ENCODE measurements at regions of chr12 and their contacts with region 1.

Region 1: GRCh38 chr12:109713187-109713984 is at the start of gene FAM222A:
- DNase-seq: peak; percentile 93
- H3K4me3 Mint-ChIP-seq: peak within 1 kb of the TSS; percentile 55
- H3K27ac Mint-ChIP-seq: no peak within 1 kb of the TSS
- H3K4me1 Mint-ChIP-seq: peaks cover 2% of the 10 kb centered on the region
- H3K27me3 Mint-ChIP-seq: peaks cover 35% of the 10 kb centered on the region
- total RNA-seq, gene FAM222A: 0.20 to 0.38 TPM

Region 2: DNA sequence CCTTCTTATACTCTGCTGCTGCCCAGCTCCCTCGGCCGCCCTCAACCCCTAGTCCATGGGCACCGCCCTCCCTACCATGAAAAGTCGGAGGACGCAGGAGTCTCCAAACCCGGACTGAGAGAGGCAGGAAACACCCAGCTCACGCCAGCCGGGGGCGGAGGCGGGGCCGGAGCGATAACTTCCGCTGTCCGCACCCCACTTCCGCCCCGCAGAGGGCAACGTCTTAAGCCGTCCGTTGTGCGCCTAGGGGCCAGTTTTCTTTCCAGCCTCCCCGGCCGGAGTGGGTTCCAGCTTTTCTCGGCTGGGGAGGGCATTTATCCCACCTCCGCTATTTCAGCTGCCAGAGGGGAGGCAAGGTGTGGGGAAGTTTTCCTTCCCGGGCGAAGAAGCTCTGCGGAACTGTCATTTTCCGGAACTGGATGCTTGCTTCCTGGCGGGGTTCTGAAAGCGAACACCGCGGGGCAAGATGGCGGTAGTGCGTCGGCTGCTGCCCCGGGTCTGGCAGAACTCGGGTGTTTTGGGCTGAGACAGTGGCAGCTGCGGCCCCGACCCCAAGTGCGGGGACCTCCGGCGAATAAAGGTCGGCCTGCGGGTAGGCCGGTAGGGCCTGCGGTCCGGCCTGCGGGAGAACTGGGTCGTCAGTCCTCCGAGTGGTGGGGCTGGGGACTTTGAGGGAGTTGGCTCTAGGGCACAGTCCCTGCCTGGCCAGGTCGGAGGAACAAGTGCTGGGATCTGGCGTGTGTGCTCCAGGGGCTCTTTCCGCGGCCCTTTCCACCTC is 236.0 kb before region 1 on chr12 and contains the starts of genes KCTD10 and UBE3B:
- CTCF ChIA-PET with region 1: no interaction called
- intact Hi-C with region 1: loop called (anchors 1 kb)
- DNase-seq: peak; percentile 87
- H3K4me3 Mint-ChIP-seq: peak within 1 kb of the TSS; percentile 97
- H3K27ac Mint-ChIP-seq: peak within 1 kb of the TSS; percentile 98
- H3K4me1 Mint-ChIP-seq: peaks cover 49% of the 10 kb centered on the region
- H3K27me3 Mint-ChIP-seq: no peaks in the 10 kb centered on the region
- total RNA-seq, gene KCTD10: 31.1 to 33.4 TPM
- total RNA-seq, gene UBE3B: 26.2 to 26.6 TPM

Region 3: GRCh38 chr12:109597795-109598427 is 115.5 kb before region 1 on chr12:
- CTCF ChIA-PET with region 1: interaction called, 9 read pairs
- intact Hi-C with region 1: loop called (anchors 1 kb)
- DNase-seq: peak; percentile 80
- H3K4me3 Mint-ChIP-seq: no peak overlapping the region
- H3K27ac Mint-ChIP-seq: no peak overlapping the region
- H3K4me1 Mint-ChIP-seq: peaks cover 35% of the 10 kb centered on the region
- H3K27me3 Mint-ChIP-seq: no peaks in the 10 kb centered on the region

Region 4: GRCh38 chr12:109880016-109880931 is 166.9 kb after region 1 on chr12 and contains the start of gene GLTP:
- CTCF ChIA-PET with region 1: no interaction called
- intact Hi-C with region 1: loop called (anchors 5 kb)
- DNase-seq: peak; percentile 86
- H3K4me3 Mint-ChIP-seq: peak within 1 kb of the TSS; percentile 93
- H3K27ac Mint-ChIP-seq: peak within 1 kb of the TSS; percentile 66
- H3K4me1 Mint-ChIP-seq: peaks cover 42% of the 10 kb centered on the region
- H3K27me3 Mint-ChIP-seq: no peaks in the 10 kb centered on the region
- total RNA-seq, gene GLTP: 18.1 to 19.9 TPM

Region 5: DNA sequence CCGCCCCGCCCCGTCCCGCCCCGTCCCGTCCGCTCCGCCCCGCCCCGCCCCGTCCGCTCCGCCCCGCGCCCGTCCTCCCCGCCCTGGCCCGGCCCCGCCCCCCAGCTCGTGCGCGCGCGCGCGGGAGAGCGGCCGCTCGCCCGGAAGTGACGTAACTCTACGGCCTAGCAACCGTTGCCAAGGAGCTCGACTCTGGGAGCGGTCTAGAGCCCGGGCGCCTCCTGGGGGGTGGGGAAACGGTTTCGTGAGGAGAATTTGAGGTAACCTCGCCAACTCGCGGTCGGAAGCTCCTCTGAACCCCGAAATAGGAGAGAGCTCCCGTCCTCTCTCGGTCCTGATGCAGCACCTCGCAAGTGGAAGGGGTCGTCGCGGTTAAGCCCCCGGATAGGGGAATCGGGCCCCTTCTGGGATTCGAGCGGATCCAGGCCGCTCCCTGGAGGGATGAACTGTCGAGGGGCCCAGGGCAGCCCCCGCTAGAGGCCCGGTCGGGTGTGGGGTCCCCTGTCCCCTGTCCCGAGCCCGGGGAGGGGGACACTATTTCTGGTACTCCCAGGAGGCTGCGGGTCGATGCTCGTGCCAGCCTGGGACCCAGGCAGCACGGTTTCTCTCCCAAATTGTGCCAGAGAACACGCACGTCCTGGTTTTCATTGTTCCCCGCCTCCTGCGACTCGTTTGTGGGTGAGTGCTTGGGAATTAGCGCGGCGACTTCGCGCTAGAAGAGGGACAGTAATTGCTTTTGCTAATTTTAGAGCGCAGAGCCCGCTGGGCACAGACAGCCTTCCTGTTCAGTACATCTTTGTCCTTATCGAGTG is 411.0 kb after region 1 on chr12 and contains the start of gene IFT81:
- CTCF ChIA-PET with region 1: no interaction called
- intact Hi-C with region 1: loop called (anchors 2 kb)
- DNase-seq: peak; percentile 95
- H3K4me3 Mint-ChIP-seq: peak within 1 kb of the TSS; percentile 89
- H3K27ac Mint-ChIP-seq: no peak within 1 kb of the TSS
- H3K4me1 Mint-ChIP-seq: peaks cover 7% of the 10 kb centered on the region
- H3K27me3 Mint-ChIP-seq: peaks cover 2% of the 10 kb centered on the region
- total RNA-seq, gene IFT81: 1.7 to 2.2 TPM